ENCODE measurements at regions of chr10 and their contacts with region 1.

Region 1: DNA sequence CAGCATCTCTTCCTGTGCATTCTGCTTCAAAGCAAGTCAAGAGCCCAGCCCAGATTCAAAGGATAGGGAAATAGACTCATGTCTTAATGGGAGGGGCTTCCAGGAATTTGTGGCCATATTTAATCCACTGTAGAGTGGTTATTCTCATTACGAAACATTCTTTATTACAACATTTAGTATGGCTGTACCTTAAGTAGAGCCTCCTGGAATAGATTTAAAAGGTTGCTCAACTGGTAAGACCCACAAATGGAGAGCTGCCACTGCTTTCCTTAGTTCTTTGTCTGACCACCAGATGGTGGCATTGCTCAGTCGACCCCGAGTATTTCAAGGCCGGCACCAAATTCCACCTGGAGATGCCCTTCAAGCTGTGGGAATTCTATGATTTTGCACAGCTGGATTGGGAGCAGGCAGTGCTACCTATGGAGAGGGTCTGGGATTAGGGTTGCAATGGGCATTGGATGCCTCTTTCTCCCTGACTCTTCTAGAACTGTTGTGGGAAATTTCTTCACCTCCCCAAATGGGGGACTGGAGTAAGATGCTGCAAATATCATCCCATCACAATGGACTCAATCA is 102.2 kb downstream of the RBM20 start:
- DNase-seq: peak; percentile 87
- H3K4me3 Mint-ChIP-seq: no peak overlapping the region
- H3K27ac Mint-ChIP-seq: peak overlapping the region; percentile 51
- H3K4me1 Mint-ChIP-seq: peaks cover 14% of the 10 kb centered on the region
- H3K27me3 Mint-ChIP-seq: no peaks in the 10 kb centered on the region
- CTCF ChIP-seq: peak; percentile 86

Region 2: GRCh38 chr10:110311357-110311949 is 434.9 kb before region 1 on chr10:
- CTCF ChIA-PET with region 1: no interaction called
- POLR2A ChIA-PET with region 1: no interaction called
- intact Hi-C with region 1: loop called (anchors 1 kb)
- DNase-seq: peak; percentile 77
- H3K4me3 Mint-ChIP-seq: no peak overlapping the region
- H3K27ac Mint-ChIP-seq: no peak overlapping the region
- H3K4me1 Mint-ChIP-seq: no peaks in the 10 kb centered on the region
- H3K27me3 Mint-ChIP-seq: no peaks in the 10 kb centered on the region
- CTCF ChIP-seq: peak; percentile 69

Region 3: GRCh38 chr10:110852255-110852896 is 106.0 kb after region 1 on chr10:
- CTCF ChIA-PET with region 1: interaction called, 3 read pairs
- POLR2A ChIA-PET with region 1: interaction called, 12 read pairs
- intact Hi-C with region 1: no loop called
- DNase-seq: peak; percentile 86
- H3K4me3 Mint-ChIP-seq: no peak overlapping the region
- H3K27ac Mint-ChIP-seq: peak overlapping the region; percentile 36
- H3K4me1 Mint-ChIP-seq: peaks cover 36% of the 10 kb centered on the region
- H3K27me3 Mint-ChIP-seq: no peaks in the 10 kb centered on the region
- CTCF ChIP-seq: no peak

Region 4: GRCh38 chr10:110893559-110894179 is 147.3 kb after region 1 on chr10:
- CTCF ChIA-PET with region 1: interaction called, 22 read pairs
- POLR2A ChIA-PET with region 1: interaction called, 6 read pairs
- intact Hi-C with region 1: loop called (anchors 1 kb)
- DNase-seq: peak; percentile 54
- H3K4me3 Mint-ChIP-seq: no peak overlapping the region
- H3K27ac Mint-ChIP-seq: no peak overlapping the region
- H3K4me1 Mint-ChIP-seq: peaks cover 16% of the 10 kb centered on the region
- H3K27me3 Mint-ChIP-seq: no peaks in the 10 kb centered on the region
- CTCF ChIP-seq: peak; percentile 52

Region 5: GRCh38 chr10:111076191-111076681 is 329.9 kb after region 1 on chr10:
- CTCF ChIA-PET with region 1: interaction called, 4 read pairs
- POLR2A ChIA-PET with region 1: no interaction called
- intact Hi-C with region 1: loop called (anchors 5 kb)
- DNase-seq: peak; percentile 42
- H3K4me3 Mint-ChIP-seq: peak overlapping the region; percentile 69
- H3K27ac Mint-ChIP-seq: no peak overlapping the region
- H3K4me1 Mint-ChIP-seq: no peaks in the 10 kb centered on the region
- H3K27me3 Mint-ChIP-seq: peaks cover 46% of the 10 kb centered on the region
- CTCF ChIP-seq: peak; percentile 88

Region 6: GRCh38 chr10:111598436-111599059 is 852.2 kb after region 1 on chr10:
- CTCF ChIA-PET with region 1: no interaction called
- POLR2A ChIA-PET with region 1: no interaction called
- intact Hi-C with region 1: loop called (anchors 5 kb)
- DNase-seq: peak; percentile 67
- H3K4me3 Mint-ChIP-seq: no peak overlapping the region
- H3K27ac Mint-ChIP-seq: no peak overlapping the region
- H3K4me1 Mint-ChIP-seq: no peaks in the 10 kb centered on the region
- H3K27me3 Mint-ChIP-seq: no peaks in the 10 kb centered on the region
- CTCF ChIP-seq: peak; percentile 80